ENCODE measurements at regions of chrX and their contacts with region 1.

Region 1: GRCh38 chrX:24846551-24847157 is 152.9 kb downstream of the POLA1 start:
- DNase-seq: no peak
- ATAC-seq: no peak

Region 2: DNA sequence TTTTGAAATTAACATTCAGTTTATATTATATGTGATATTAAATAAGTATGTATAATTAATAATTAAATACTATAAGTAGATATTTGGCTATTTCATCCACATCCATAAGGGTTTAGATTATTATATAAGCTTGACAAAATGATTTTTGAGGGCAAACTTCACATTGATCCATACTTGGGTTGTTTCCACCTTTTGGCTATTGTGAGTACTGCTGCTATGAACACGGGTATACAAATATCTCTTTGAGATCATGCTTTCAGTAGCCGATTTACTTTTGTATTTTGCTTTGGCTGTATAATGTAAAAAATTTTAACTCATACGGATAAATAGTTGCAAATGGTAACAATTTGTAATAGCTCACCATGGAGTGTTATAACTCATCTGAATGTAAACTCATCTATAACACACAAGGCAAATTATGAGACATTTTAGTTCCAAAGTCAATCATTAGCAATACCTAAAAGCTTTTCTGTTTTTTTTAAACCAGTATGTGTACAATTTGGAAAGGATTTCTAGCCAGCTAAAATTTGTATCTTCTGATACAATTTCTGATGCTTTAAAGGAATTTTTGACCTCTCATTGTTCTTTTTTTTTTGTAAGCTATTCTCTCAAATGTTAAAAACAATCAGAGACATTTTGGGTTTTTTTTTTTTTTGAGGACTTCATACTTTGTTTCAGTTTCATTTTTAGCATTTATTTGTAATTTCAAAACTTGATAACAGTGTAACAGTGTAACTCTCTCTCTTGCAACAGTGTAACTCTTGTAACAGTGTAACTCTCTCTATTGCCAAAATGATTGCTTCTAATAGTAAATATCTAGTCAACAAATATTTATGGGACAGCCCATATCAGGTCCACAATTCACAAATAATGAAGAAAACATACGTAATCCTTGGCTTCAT is 220.9 kb after region 1 on chrX:
- intact Hi-C with region 1: no loop called
- DNase-seq: no peak
- ATAC-seq: no peak

Region 3: GRCh38 chrX:25144043-25144940 is 297.6 kb after region 1 on chrX:
- intact Hi-C with region 1: loop called (anchors 10 kb)
- DNase-seq: peak; percentile 64
- ATAC-seq: peak; percentile 53

Measured in Right ventricle myocardium superior (tissue), 1 donor.